Heart left ventricle (tissue), 16 donors: ENCODE measurements at regions of chr1 and their contacts with region 1.

Region 1: DNA sequence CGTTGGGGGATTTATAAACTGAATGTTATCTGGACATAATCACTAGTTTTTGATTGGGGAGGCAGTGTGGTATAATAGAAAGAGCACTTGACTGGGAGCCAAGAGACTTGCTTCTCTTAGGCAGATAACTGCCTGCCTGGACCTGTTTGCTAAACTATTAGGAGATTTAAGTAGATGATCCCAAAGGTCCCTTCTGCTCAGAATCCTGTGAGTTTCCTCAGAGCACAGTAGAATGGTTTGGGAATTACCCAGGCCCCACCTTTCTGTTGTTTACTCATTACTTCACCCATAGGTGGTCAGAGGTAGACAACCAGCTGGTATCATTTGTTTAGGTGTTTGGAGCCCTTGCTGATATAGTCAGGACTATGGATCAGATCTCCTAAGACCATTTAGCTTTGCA is 10.3 kb upstream of the PODN start:
- DNase-seq: no peak
- ATAC-seq: no peak
- H3K4me3 ChIP-seq: no peak overlapping the region
- H3K27ac ChIP-seq: no peak overlapping the region
- H3K4me1 ChIP-seq: peaks cover 2 to 37% (median 33%) of the 10 kb centered on the region in 12 donors
- H3K27me3 ChIP-seq: no peaks in the 10 kb centered on the region
- CTCF ChIP-seq: no peak
- POLR2A ChIP-seq: no peak

Region 2: DNA sequence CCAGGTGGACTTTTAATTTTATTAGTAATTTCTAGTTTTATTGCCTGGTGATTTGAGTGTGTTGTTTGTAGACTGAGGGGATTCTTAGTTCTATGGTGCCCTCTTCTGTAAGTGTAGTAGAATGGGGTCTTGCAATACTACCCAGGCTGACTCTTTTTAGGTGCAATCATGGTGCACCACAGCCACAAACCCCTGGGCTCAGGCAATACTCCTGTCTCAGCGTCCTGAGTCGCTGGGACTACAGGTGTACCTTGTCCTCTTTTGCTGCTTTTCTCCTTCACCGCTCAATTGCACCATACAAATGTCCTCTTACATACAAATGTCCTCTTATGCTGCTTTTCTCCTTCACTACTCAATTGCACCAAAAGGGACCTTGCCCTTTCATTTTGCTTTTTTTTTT is 81.5 kb before region 1 on chr1:
- intact Hi-C with region 1: no loop called
- DNase-seq: no peak
- ATAC-seq: peak in 1 of 4 donors; percentile 30
- H3K4me3 ChIP-seq: no peak overlapping the region
- H3K27ac ChIP-seq: no peak overlapping the region
- H3K4me1 ChIP-seq: no peaks in the 10 kb centered on the region
- H3K27me3 ChIP-seq: no peaks in the 10 kb centered on the region
- CTCF ChIP-seq: peak in 7 of 12 donors; percentile 10 to 41 (median 30)
- POLR2A ChIP-seq: no peak

Region 3: GRCh38 chr1:53014791-53015507 is 36.7 kb before region 1 on chr1:
- intact Hi-C with region 1: loop called in 2 of 10 experiments (anchors 5 kb)
- DNase-seq: peak; percentile 71 to 85 (median 83)
- ATAC-seq: peak; percentile 88 to 99 (median 97)
- H3K4me3 ChIP-seq: peak overlapping the region; percentile 21 to 74 (median 62)
- H3K27ac ChIP-seq: peak overlapping the region in 11 of 12 donors; percentile 1 to 75 (median 66)
- H3K4me1 ChIP-seq: peaks cover 0 to 25% (median 19%) of the 10 kb centered on the region in 12 donors
- H3K27me3 ChIP-seq: no peaks in the 10 kb centered on the region
- CTCF ChIP-seq: no peak
- POLR2A ChIP-seq: no peak